IMR-90 (cell line): ENCODE measurements at regions of chrX and their contacts with region 1.

Region 1: DNA sequence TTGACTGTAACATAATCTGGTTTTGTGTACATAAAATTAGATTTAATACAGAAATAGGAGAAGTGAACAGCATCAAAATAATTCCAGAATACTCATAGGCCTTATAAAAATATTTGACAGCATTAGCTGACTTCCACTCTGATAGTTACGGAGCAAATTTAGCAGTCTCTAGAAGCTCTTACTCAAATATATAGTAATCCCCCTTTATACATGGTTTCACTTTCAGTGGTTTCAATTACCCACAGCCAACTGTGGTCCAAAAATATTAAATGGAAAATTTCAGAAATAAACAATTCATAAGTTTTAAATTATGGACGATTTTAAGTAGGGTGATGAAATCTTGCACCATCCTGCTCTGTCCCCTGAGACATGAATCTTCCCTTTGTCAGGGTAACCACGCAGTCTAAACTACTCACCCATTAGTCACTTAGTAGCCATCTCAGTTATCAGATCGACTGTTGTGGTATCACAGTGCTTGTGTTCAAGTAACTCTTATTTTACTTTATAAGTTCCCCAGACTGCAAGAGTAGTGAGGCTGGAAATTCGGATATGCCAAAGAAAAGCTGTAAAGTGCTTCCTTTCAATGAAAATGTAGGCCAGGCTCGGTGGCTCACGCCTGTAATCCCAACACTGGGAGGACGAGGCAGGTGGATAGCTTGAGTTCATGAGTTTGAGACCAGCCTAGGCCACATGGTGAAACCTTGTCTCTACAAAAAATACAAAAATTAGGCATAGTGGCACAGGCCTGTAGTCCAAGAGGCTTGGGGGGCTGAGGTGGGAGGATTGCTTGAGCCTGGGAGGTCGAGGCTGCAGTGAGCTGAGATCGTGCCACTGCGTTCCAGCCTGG is 17.2 kb upstream of the RTL9 start:
- DNase-seq: peak; percentile 91
- ATAC-seq: peak; percentile 88
- H3K4me3 ChIP-seq: no peak overlapping the region
- H3K27ac ChIP-seq: peak overlapping the region; percentile 73
- H3K4me1 ChIP-seq: 0 out of 2 replicates have a peak, but pooled peaks cover 3% of the 10 kb centered on the region
- H3K27me3 ChIP-seq: no peaks in the 10 kb centered on the region
- CTCF ChIP-seq: no peak
- POLR2A ChIP-seq: no peak
- RAD21 ChIP-seq: no peak

Region 2: GRCh38 chrX:109709129-109709631 is 632.2 kb before region 1 on chrX:
- CTCF ChIA-PET with region 1: no interaction called
- POLR2A ChIA-PET with region 1: no interaction called
- dilution Hi-C with region 1: no loop called
- in situ Hi-C with region 1: no loop called
- intact Hi-C with region 1: no loop called
- DNase-seq: peak; percentile 65
- ATAC-seq: peak; percentile 55
- H3K4me3 ChIP-seq: no peak overlapping the region
- H3K27ac ChIP-seq: peak overlapping the region; percentile 48; the same call in 1 of the 2 replicates
- H3K4me1 ChIP-seq: peaks cover 4% of the 10 kb centered on the region
- H3K27me3 ChIP-seq: no peaks in the 10 kb centered on the region; the same call in 1 of the 2 replicates
- CTCF ChIP-seq: peak; percentile 11; the same call in 1 of the 2 replicates
- POLR2A ChIP-seq: no peak
- RAD21 ChIP-seq: no peak

Region 3: GRCh38 chrX:110286136-110286535 is 55.3 kb before region 1 on chrX:
- CTCF ChIA-PET with region 1: no interaction called
- POLR2A ChIA-PET with region 1: no interaction called
- dilution Hi-C with region 1: no loop called
- in situ Hi-C with region 1: no loop called
- intact Hi-C with region 1: loop called (anchors 2 kb)
- DNase-seq: peak; percentile 89
- ATAC-seq: peak; percentile 50
- H3K4me3 ChIP-seq: no peak overlapping the region
- H3K27ac ChIP-seq: peak overlapping the region; percentile 99
- H3K4me1 ChIP-seq: peaks cover 15% of the 10 kb centered on the region
- H3K27me3 ChIP-seq: no peaks in the 10 kb centered on the region; the same call in 1 of the 2 replicates
- CTCF ChIP-seq: no peak
- POLR2A ChIP-seq: no peak
- RAD21 ChIP-seq: no peak

Region 4: GRCh38 chrX:110402479-110403230 is 61.2 kb after region 1 on chrX:
- CTCF ChIA-PET with region 1: no interaction called
- POLR2A ChIA-PET with region 1: no interaction called
- dilution Hi-C with region 1: no loop called
- in situ Hi-C with region 1: no loop called
- intact Hi-C with region 1: loop called (anchors 1 kb)
- DNase-seq: peak; percentile 74
- ATAC-seq: peak; percentile 93
- H3K4me3 ChIP-seq: no peak overlapping the region
- H3K27ac ChIP-seq: peak overlapping the region; percentile 32
- H3K4me1 ChIP-seq: peaks cover 6% of the 10 kb centered on the region
- H3K27me3 ChIP-seq: no peaks in the 10 kb centered on the region; the same call in 1 of the 2 replicates
- CTCF ChIP-seq: no peak
- POLR2A ChIP-seq: no peak
- RAD21 ChIP-seq: no peak; the same call in 1 of the 2 replicates

Region 5: GRCh38 chrX:110407910-110408545 is 66.6 kb after region 1 on chrX:
- CTCF ChIA-PET with region 1: no interaction called
- POLR2A ChIA-PET with region 1: no interaction called
- dilution Hi-C with region 1: no loop called
- in situ Hi-C with region 1: no loop called
- intact Hi-C with region 1: loop called (anchors 1 kb)
- DNase-seq: peak; percentile 71
- ATAC-seq: peak; percentile 76
- H3K4me3 ChIP-seq: no peak overlapping the region
- H3K27ac ChIP-seq: no peak overlapping the region
- H3K4me1 ChIP-seq: peaks cover 10% of the 10 kb centered on the region
- H3K27me3 ChIP-seq: peaks cover 4% of the 10 kb centered on the region; the same call in 1 of the 2 replicates
- CTCF ChIP-seq: peak; percentile 83
- POLR2A ChIP-seq: no peak
- RAD21 ChIP-seq: peak; percentile 84

Region 6: DNA sequence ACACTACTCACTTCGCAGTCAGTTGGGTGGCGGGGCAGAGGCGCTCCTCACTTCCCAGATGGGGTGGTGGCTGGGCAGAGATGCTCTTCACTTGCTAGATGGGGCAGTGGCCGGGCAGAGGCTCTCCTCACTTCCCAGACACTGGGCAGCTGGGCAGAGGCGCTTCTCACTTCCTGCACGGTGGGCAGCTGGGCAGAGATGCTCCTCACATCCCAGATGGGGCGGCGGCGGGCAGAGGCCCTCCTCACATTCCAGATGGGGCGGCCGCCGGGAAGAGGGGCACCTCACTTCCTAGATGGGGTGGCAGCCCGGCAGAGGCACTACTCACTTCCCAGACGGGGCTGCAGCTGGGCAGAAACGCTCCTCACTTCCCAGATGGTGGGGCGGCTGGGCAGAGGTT is 217.0 kb after region 1 on chrX:
- CTCF ChIA-PET with region 1: no interaction called
- POLR2A ChIA-PET with region 1: no interaction called
- dilution Hi-C with region 1: no loop called
- in situ Hi-C with region 1: no loop called
- intact Hi-C with region 1: no loop called
- DNase-seq: no peak
- ATAC-seq: no peak
- H3K4me3 ChIP-seq: no peak overlapping the region
- H3K27ac ChIP-seq: no peak overlapping the region
- H3K4me1 ChIP-seq: no peaks in the 10 kb centered on the region
- H3K27me3 ChIP-seq: no peaks in the 10 kb centered on the region
- CTCF ChIP-seq: no peak
- POLR2A ChIP-seq: no peak
- RAD21 ChIP-seq: no peak

Region 7: GRCh38 chrX:110569506-110569905 is 228.1 kb after region 1 on chrX:
- CTCF ChIA-PET with region 1: no interaction called
- POLR2A ChIA-PET with region 1: no interaction called
- dilution Hi-C with region 1: no loop called
- in situ Hi-C with region 1: no loop called
- intact Hi-C with region 1: no loop called
- DNase-seq: no peak
- ATAC-seq: no peak
- H3K4me3 ChIP-seq: no peak overlapping the region
- H3K27ac ChIP-seq: no peak overlapping the region
- H3K4me1 ChIP-seq: no peaks in the 10 kb centered on the region
- H3K27me3 ChIP-seq: peaks cover 2% of the 10 kb centered on the region; the same call in 1 of the 2 replicates
- CTCF ChIP-seq: no peak
- POLR2A ChIP-seq: no peak
- RAD21 ChIP-seq: no peak

Region 8: DNA sequence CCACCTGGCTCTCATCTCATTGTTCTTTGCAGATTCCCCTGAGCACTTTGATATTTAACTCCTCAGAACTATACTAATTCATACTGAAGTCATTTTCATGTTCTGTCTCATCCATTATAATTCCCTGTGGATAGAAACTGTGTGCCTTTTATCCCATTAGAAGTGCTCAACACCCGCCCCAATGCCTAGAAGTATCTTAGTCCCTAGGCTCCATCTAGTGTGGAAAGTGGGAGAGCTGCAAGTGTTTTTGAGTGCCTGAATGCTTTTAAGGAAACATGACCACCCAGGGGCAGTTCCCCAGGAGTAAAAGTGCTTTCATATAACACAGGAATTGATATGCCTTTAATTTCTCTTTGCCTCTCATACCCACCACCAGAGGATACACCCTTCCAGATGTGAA is 337.2 kb after region 1 on chrX:
- CTCF ChIA-PET with region 1: no interaction called
- POLR2A ChIA-PET with region 1: no interaction called
- dilution Hi-C with region 1: no loop called
- in situ Hi-C with region 1: no loop called
- intact Hi-C with region 1: no loop called
- DNase-seq: no peak
- ATAC-seq: no peak
- H3K4me3 ChIP-seq: no peak overlapping the region
- H3K27ac ChIP-seq: no peak overlapping the region
- H3K4me1 ChIP-seq: no peaks in the 10 kb centered on the region
- H3K27me3 ChIP-seq: peaks cover 17% of the 10 kb centered on the region
- CTCF ChIP-seq: no peak
- POLR2A ChIP-seq: no peak
- RAD21 ChIP-seq: no peak